ENCODE measurements at regions of chr4 and their contacts with region 1.

Region 1: DNA sequence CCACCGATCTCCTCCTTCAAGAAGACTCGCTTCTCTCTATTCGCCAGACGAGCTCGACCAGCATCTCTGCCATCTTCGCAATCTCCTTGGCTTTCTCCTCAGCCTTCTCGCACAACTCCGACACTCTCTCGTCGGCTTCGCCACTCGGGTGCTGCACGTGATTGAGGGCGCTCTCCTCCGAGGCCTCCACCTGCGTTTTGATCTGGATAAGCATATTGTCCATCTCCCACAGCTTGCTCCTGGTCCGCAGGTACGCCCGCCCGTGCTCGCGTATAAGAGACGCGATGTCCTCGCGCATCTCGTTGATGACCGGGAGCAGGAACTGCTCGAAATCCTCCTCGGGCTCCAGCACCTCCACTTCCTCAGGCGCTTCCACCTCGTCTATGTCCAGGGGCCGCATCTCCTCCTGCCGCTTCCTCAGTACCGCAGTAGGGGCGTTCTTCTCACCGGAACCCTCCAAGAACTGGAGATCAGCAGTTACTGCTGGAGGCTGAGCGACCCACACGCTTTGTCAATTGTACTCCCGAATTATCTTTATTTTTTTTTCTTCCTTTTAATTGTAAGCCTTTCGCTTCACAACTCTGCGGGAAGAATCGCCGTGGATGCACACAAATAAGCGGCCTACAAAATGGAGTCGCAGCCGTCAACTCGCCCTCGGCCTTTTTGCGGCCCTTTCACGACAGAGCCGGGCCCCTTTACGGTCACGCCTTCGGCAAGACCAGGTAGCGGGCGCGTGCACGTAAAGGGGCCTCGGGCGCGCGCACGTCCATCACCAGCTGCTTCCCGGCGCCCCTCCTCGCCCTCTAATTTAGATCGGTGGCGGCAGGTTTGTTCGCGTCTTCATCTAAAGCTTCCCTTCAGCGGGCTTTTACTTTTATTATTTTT is at the start of gene MRFAP1L1:
- ATAC-seq: peak; percentile 79 to 88 (median 82)
- H3K4me3 ChIP-seq: peak within 1 kb of the TSS; percentile 68 to 87 (median 80)
- H3K27ac ChIP-seq: peak within 1 kb of the TSS; percentile 89 to 96
- H3K4me1 ChIP-seq: peaks cover 14 to 18% of the 10 kb centered on the region in 2 donors
- total RNA-seq, gene MRFAP1L1: 59.6 to 135 (median 91.4) TPM

Region 2: DNA sequence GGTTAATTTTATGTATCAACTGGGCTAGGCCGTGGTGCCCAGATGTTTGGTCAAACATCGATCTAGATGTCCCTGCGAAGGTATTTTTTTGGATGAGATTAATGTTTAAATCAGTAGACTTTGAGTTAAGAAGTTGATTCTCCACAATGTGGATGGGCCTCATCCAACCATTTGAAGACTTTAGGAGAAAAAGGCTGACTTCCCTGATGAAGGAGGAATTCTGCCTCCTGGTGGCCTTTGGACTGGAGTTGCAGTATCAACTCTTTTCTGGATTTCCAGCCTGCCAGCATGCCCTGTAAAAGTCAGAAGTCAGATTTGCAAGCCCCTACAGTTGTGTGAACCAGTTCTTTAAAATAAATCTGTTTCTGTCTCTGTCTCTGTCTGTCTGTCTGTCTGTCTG is 1566.7 kb before region 1 on chr4:
- in situ Hi-C with region 1: no loop called
- ATAC-seq: peak in 3 of 8 experiments; percentile 29 to 57 (median 51)
- H3K4me3 ChIP-seq: no peak overlapping the region
- H3K27ac ChIP-seq: no peak overlapping the region
- H3K4me1 ChIP-seq: no peaks in the 10 kb centered on the region

Region 3: DNA sequence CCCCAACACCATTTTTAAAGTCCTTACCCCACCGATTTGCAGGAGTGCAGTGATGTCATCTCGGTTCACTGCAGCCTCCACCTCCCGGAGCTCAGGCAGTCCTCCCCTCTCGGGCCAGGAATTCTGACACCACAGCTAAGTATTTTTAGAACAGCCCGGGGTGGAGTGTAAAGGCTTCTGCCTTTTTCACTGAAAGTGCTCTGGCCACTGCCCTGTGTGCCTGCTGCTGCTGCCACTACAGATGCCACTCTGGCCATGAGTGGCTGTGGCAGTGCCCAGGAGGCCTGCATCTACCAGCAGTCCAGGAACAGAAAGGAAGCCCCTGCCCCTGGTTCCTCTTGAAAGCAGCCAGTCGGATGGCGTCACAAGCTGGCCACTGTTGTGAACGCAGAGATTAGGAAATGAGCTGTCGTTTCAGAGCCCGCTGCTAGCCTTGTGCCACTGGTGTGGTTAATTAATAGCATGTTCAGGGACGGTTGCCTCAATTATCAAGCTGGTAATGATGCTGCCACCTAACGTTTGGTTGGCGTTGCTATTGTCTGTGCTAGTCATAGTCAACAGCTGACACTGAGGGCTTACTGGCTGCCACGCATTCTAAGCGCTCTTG is 176.6 kb after region 1 on chr4:
- in situ Hi-C with region 1: loop called in 4 of 9 experiments (anchors 25 kb)
- ATAC-seq: peak in 7 of 8 experiments; percentile 22 to 91 (median 56)
- H3K4me3 ChIP-seq: no peak overlapping the region
- H3K27ac ChIP-seq: no peak overlapping the region
- H3K4me1 ChIP-seq: peaks cover 0 to 10% of the 10 kb centered on the region in 2 donors

Region 4: GRCh38 chr4:7042697-7043464 is 333.4 kb after region 1 on chr4 and contains the start of gene TADA2B:
- in situ Hi-C with region 1: loop called in 1 of 9 experiments (anchors 25 kb)
- ATAC-seq: peak; percentile 75 to 93 (median 92)
- H3K4me3 ChIP-seq: peak within 1 kb of the TSS; percentile 87 to 98 (median 90)
- H3K27ac ChIP-seq: peak within 1 kb of the TSS; percentile 88 to 93
- H3K4me1 ChIP-seq: peaks cover 19 to 21% of the 10 kb centered on the region in 2 donors
- total RNA-seq, gene TADA2B: 11.2 to 19.8 (median 13.7) TPM

Region 5: DNA sequence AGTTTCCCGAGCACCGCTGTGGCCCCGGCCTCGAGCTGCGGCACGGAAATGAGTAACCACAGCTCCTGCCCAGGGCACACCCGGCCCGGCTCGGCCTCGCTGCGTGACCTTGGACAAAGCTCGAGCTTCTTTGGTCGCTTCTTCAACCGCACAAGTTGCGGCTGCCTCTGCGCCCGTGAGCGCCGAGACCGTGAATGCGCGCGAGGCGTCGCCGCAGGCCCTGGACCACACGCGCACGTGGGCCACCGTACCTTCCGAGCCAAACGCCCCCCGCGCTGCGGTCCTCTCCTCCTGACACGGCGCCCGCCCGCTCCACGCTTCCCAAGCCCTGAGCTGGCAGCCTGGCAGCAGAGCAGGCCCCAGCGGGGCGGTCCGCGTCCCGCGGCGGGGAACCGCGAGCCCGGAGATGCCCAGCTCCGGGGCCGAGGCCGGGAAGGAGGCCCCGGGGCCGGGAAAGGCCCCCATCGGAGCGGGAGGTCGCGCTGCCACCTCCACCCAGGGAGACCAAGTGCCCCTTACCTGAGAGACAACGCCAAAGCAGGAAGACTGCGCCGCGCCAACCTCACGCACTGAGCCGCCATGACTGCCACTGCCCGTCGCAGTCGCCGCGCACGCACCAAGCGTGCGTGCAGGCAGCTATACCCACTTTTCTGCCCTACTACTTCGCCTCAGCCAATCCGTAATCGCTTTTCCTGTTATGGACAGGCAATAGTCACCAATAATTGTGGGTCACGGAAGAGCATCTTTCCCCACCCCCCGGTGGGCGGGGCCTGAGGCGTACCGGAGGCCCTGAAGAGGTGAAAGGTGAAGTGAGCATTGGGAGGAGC is 358.2 kb after region 1 on chr4 and contains the start of gene GRPEL1:
- in situ Hi-C with region 1: loop called in 3 of 9 experiments (anchors 25 kb)
- ATAC-seq: peak; percentile 89 to 96 (median 95)
- H3K4me3 ChIP-seq: peak within 1 kb of the TSS; percentile 74 to 96 (median 90)
- H3K27ac ChIP-seq: peak within 1 kb of the TSS; percentile 66 to 85
- H3K4me1 ChIP-seq: peaks cover 8 to 10% of the 10 kb centered on the region in 2 donors
- total RNA-seq, gene GRPEL1: 14.3 to 75.1 (median 20.3) TPM

Region 6: GRCh38 chr4:7081891-7082471 is 372.5 kb after region 1 on chr4:
- in situ Hi-C with region 1: loop called in 1 of 9 experiments (anchors 25 kb)
- ATAC-seq: peak; percentile 46 to 78 (median 54)
- H3K4me3 ChIP-seq: no peak overlapping the region
- H3K27ac ChIP-seq: no peak overlapping the region
- H3K4me1 ChIP-seq: no peaks in the 10 kb centered on the region

Region 7: DNA sequence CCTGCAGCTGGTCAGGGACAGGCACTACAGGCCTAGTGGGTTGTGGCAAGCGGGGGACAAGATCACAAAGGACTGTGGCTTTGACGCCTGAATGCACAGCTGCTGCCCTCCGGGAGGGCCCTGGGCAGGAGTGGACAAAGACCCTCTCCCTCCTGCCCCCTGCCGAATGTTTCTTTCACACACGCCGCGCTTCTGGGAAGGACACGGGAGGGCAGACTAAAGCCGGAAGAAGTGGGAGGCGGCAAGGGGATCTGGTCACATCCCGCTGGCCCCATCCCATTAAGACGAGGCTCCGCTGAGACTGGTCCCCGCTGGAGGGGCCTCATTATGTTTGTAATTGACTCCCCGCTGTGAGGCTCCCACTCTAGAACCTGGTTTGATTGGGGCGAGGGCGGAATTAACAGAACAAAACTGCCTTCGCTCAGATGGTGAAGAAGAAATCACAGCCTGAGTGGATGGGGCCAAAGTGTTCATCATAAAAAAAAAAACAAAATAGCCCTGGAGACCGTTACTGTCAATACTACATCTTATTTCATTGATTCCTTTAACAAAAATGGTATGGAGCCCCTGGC is 763.1 kb after region 1 on chr4:
- in situ Hi-C with region 1: no loop called
- ATAC-seq: peak in 5 of 8 experiments; percentile 82 to 90 (median 86)
- H3K4me3 ChIP-seq: no peak overlapping the region
- H3K27ac ChIP-seq: peak overlapping the region; percentile 26 to 58
- H3K4me1 ChIP-seq: peaks cover 48 to 63% of the 10 kb centered on the region in 2 donors

Measured in motor neuron (in vitro differentiated cells).